Left lung (tissue), 14 donors: ENCODE measurements at regions of chr6 and their contacts with region 1.

Region 1: GRCh38 chr6:110137924-110138887 is 41.3 kb downstream of the WASF1 start:
- DNase-seq: peak in 1 of 4 donors; percentile 37
- ATAC-seq: no peak
- H3K4me3 ChIP-seq: no peak overlapping the region
- H3K27ac ChIP-seq: no peak overlapping the region
- H3K4me1 ChIP-seq: no peaks in the 10 kb centered on the region
- H3K27me3 ChIP-seq: peaks cover 0 to 4% of the 10 kb centered on the region in 2 donors
- CTCF ChIP-seq: no peak

Region 2: GRCh38 chr6:110125361-110125760 is 12.8 kb before region 1 on chr6:
- intact Hi-C with region 1: loop called in 1 of 2 experiments (anchors 2 kb)
- DNase-seq: no peak
- ATAC-seq: no peak
- H3K4me3 ChIP-seq: no peak overlapping the region
- H3K27ac ChIP-seq: no peak overlapping the region
- H3K4me1 ChIP-seq: no peaks in the 10 kb centered on the region
- H3K27me3 ChIP-seq: no peaks in the 10 kb centered on the region
- CTCF ChIP-seq: no peak

Region 3: DNA sequence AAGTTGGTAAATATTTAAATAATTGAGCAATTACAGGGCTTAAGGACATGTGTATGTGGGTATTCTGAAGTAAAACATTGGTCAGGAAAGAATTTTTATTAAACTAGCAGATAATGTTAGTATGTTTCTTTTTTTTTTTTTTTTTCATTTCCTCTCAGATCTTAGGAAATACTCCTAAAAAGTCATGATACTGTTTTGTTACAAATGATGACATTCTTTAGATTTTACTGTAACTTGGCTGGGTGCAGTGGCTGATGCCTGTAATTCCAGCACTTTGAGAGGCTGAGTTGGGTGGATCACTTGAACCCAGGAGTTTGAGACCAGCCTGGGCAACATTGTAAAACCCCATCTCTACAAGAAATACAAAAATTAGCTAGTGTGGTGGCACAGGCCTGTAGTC is 83.5 kb after region 1 on chr6:
- intact Hi-C with region 1: no loop called
- DNase-seq: no peak
- ATAC-seq: no peak
- H3K4me3 ChIP-seq: no peak overlapping the region
- H3K27ac ChIP-seq: no peak overlapping the region
- H3K4me1 ChIP-seq: no peaks in the 10 kb centered on the region
- H3K27me3 ChIP-seq: no peaks in the 10 kb centered on the region
- CTCF ChIP-seq: no peak